HEK293T (cell line): ENCODE measurements at regions of chr5 and their contacts with region 1.

Region 1: GRCh38 chr5:32589942-32590869 is 4.8 kb downstream of the SUB1 start:
- DNase-seq: no peak

Region 2: DNA sequence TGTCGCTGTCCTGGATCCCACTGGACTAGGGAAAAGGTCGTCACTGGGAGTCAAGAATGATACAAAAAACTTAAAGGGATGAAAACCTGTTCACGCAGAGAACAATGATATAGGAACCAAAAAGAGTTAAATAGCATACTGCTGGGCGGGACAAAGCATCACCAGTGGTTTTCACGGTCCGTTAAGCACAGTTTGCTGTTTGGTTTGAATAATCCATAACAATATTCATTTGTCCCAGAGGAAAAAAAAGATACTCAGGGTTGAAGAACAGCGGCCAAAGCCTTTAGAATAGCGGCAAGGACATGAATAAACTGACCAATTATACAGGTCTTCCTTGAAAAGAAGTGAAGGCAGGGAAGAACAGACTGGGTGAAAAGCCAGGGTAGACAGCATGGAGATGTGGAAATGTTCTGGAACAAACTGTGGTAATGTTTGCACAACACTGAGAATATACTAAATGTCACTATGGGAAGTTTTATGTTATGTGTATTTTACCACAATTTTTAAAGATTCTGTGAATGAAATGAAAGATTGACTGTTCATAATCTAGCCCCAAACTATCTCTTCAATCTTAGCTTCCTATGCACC is 338.2 kb before region 1 on chr5:
- CTCF ChIA-PET with region 1: no interaction called
- POLR2A ChIA-PET with region 1: no interaction called
- DNase-seq: no peak

Region 3: GRCh38 chr5:32475334-32476097 is 114.7 kb before region 1 on chr5:
- CTCF ChIA-PET with region 1: interaction called, 11 read pairs
- POLR2A ChIA-PET with region 1: interaction called, 4 read pairs
- DNase-seq: no peak

Region 4: GRCh38 chr5:32489791-32490582 is 100.2 kb before region 1 on chr5:
- CTCF ChIA-PET with region 1: interaction called, 70 read pairs
- POLR2A ChIA-PET with region 1: interaction called, 9 read pairs
- DNase-seq: peak; percentile 78